Thyroid gland (tissue), 4 donors: ENCODE measurements at regions of chr11 and their contacts with region 1.

Region 1: DNA sequence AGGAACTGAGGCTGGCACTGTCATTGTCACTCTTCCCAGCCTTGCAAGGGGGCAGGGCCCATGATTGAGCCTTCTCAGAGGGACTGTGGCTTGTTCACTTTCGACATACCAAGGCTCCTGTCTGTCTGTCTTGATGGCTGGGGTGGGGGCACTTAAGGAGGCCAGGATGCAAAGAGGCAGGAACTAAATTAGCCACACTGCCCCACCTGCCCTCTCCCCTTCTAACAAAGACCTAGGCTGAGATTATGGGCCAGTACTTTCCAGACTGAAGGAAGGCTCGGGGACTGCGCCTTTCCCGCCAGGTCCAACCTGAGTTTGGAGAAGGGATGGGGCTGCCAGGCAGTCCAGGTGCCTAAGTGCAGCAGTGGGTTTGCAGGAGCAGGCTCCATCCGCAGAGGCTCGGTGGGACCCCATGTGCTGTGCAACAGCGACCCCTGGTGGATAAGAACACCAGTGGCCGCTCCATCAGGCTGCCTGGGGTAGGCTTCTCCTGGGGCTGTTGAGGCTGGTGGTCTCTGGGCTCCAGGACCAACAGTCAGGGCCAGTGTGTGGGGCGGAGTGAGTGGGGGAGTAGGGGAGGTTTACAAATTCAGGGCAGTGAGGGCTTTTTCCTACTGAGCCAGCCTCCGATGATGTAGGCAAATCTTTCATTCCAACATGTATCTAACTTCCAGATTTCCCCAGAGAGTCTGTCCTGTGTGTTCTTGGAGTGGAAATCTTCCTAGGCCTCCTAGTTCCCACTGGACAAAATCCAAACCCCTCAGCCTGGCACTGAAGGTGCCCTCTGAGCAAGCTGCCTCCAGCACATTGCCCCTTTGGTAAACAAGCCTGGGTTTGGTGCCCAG is 93.9 kb downstream of the INSC start:
- DNase-seq: peak; percentile 65 to 75
- H3K4me3 ChIP-seq: no peak overlapping the region
- H3K27ac ChIP-seq: no peak overlapping the region
- H3K4me1 ChIP-seq: no peaks in the 10 kb centered on the region
- H3K27me3 ChIP-seq: no peaks in the 10 kb centered on the region
- CTCF ChIP-seq: peak; percentile 57 to 91 (median 80)
- POLR2A ChIP-seq: no peak

Region 2: GRCh38 chr11:14148653-14149273 is 1059.8 kb before region 1 on chr11:
- intact Hi-C with region 1: no loop called
- DNase-seq: no peak
- H3K4me3 ChIP-seq: no peak overlapping the region
- H3K27ac ChIP-seq: no peak overlapping the region
- H3K4me1 ChIP-seq: no peaks in the 10 kb centered on the region
- H3K27me3 ChIP-seq: no peaks in the 10 kb centered on the region
- CTCF ChIP-seq: peak in 4 of 6 experiments; percentile 19 to 51 (median 49)
- POLR2A ChIP-seq: no peak

Region 3: GRCh38 chr11:15107730-15108515 is 100.7 kb before region 1 on chr11:
- intact Hi-C with region 1: loop called (anchors 5 kb)
- DNase-seq: no peak
- H3K4me3 ChIP-seq: no peak overlapping the region
- H3K27ac ChIP-seq: no peak overlapping the region
- H3K4me1 ChIP-seq: no peaks in the 10 kb centered on the region
- H3K27me3 ChIP-seq: no peaks in the 10 kb centered on the region
- CTCF ChIP-seq: no peak
- POLR2A ChIP-seq: no peak